T-cell (primary cell): ENCODE measurements at regions of chr1 and their contacts with region 1.

Region 1: GRCh38 chr1:108691942-108692723 is at the start of gene PRPF38B:
- DNase-seq: peak; percentile 84 to 97 (median 93)
- ATAC-seq: peak; percentile 86 to 89 (median 88)
- H3K4me3 ChIP-seq: peak within 1 kb of the TSS; percentile 82 to 83
- H3K4me3 Mint-ChIP-seq: peak within 1 kb of the TSS; percentile 94 to 97 (median 96)
- H3K27ac ChIP-seq: peak within 1 kb of the TSS; percentile 95
- H3K27ac Mint-ChIP-seq: peak within 1 kb of the TSS; percentile 95 to 98
- H3K4me1 ChIP-seq: peaks cover 18 to 19% of the 10 kb centered on the region in 2 experiments
- H3K4me1 Mint-ChIP-seq: peaks cover 43 to 57% (median 44%) of the 10 kb centered on the region in 3 donors
- H3K27me3 ChIP-seq: no peaks in the 10 kb centered on the region
- H3K27me3 Mint-ChIP-seq: no peaks in the 10 kb centered on the region
- total RNA-seq, gene PRPF38B: 109 to 130 (median 110) TPM

Region 2: GRCh38 chr1:108512239-108512981 is 179.7 kb before region 1 on chr1:
- CTCF ChIA-PET with region 1: interaction called in 1 of 2 experiments, 11 read pairs
- POLR2A ChIA-PET with region 1: interaction called in 1 of 2 experiments, 4 read pairs
- DNase-seq: peak in 1 of 35 experiments; percentile 75
- ATAC-seq: peak; percentile 45 to 72 (median 52)
- H3K4me3 ChIP-seq: no peak overlapping the region
- H3K4me3 Mint-ChIP-seq: no peak overlapping the region
- H3K27ac ChIP-seq: no peak overlapping the region
- H3K27ac Mint-ChIP-seq: no peak overlapping the region
- H3K4me1 ChIP-seq: no peaks in the 10 kb centered on the region
- H3K4me1 Mint-ChIP-seq: no peaks in the 10 kb centered on the region
- H3K27me3 ChIP-seq: no peaks in the 10 kb centered on the region
- H3K27me3 Mint-ChIP-seq: peaks cover 3 to 8% of the 10 kb centered on the region in 2 donors

Region 3: DNA sequence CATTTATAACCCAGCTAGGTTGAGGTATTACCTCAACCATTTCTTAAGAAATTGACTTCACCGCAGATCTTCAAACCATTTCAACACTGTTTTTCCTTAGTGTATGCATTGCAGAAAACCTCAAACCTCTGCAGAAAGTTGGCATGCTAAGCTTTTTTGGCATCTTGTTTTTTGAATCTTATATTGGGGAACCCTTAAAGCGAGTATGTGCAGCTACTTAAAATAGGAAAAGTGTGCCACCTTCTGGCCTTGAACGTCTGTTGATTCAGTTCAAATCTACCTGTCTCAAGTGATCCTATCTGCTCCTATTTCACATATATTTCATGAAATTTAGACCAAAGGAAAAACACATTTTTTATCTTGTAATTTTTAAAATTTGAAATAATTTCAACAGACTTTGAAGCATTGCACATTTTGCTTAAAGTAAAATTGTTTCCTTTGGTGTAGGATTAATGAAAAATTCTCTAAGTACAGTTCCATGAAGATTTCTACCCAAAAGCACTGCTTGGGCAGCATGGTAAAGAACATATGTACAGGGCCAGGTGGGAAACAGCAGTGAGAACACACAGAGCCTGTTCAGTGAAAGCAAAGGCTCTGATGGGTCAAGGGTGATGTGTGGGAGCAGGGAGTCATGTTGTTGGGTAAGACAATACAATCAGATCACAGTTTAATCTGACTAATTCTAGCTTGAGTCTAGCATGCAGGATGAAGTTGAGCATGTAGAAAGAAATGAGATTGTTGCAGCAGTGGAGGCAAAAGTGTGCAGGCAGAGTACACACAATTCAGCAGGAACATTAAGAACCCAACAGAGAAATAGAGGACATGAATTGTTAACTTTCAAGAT is 48.4 kb before region 1 on chr1:
- CTCF ChIA-PET with region 1: interaction called, 3 to 36 read pairs
- POLR2A ChIA-PET with region 1: interaction called, 7 to 34 read pairs
- DNase-seq: peak in 29 of 35 experiments; percentile 18 to 84 (median 47)
- ATAC-seq: peak; percentile 15 to 37 (median 28)
- H3K4me3 ChIP-seq: no peak overlapping the region
- H3K4me3 Mint-ChIP-seq: peak overlapping the region in 2 of 3 donors; percentile 5 to 58
- H3K27ac ChIP-seq: peak overlapping the region; percentile 97
- H3K27ac Mint-ChIP-seq: peak overlapping the region; percentile 99
- H3K4me1 ChIP-seq: peaks cover 45 to 62% of the 10 kb centered on the region in 2 experiments
- H3K4me1 Mint-ChIP-seq: peaks cover 76 to 78% (median 78%) of the 10 kb centered on the region in 3 donors
- H3K27me3 ChIP-seq: no peaks in the 10 kb centered on the region
- H3K27me3 Mint-ChIP-seq: no peaks in the 10 kb centered on the region

Region 4: GRCh38 chr1:108708691-108709660 is 16.8 kb after region 1 on chr1:
- CTCF ChIA-PET with region 1: interaction called, 3 to 35 read pairs
- POLR2A ChIA-PET with region 1: interaction called, 5 to 12 read pairs
- DNase-seq: peak; percentile 29 to 79 (median 55)
- ATAC-seq: peak; percentile 74 to 84 (median 82)
- H3K4me3 ChIP-seq: no peak overlapping the region
- H3K4me3 Mint-ChIP-seq: no peak overlapping the region
- H3K27ac ChIP-seq: no peak overlapping the region
- H3K27ac Mint-ChIP-seq: peak overlapping the region; percentile 24 to 55
- H3K4me1 ChIP-seq: peaks cover 9 to 23% of the 10 kb centered on the region in 2 experiments
- H3K4me1 Mint-ChIP-seq: peaks cover 30 to 40% (median 32%) of the 10 kb centered on the region in 3 donors
- H3K27me3 ChIP-seq: no peaks in the 10 kb centered on the region
- H3K27me3 Mint-ChIP-seq: peaks cover 0 to 6% of the 10 kb centered on the region in 2 donors

Region 5: GRCh38 chr1:109099938-109100773 is 408.0 kb after region 1 on chr1:
- CTCF ChIA-PET with region 1: interaction called in 1 of 2 experiments, 9 read pairs
- POLR2A ChIA-PET with region 1: interaction called in 1 of 2 experiments, 11 read pairs
- DNase-seq: peak; percentile 92 to 98 (median 96)
- ATAC-seq: peak; percentile 92 to 96 (median 94)
- H3K4me3 ChIP-seq: peak overlapping the region; percentile 79 to 97
- H3K4me3 Mint-ChIP-seq: peak overlapping the region; percentile 92 to 96 (median 94)
- H3K27ac ChIP-seq: peak overlapping the region; percentile 84
- H3K27ac Mint-ChIP-seq: peak overlapping the region; percentile 96 to 97
- H3K4me1 ChIP-seq: peaks cover 2 to 21% of the 10 kb centered on the region in 2 experiments
- H3K4me1 Mint-ChIP-seq: peaks cover 9 to 16% (median 13%) of the 10 kb centered on the region in 3 donors
- H3K27me3 ChIP-seq: no peaks in the 10 kb centered on the region
- H3K27me3 Mint-ChIP-seq: no peaks in the 10 kb centered on the region